Activated CD8-positive, alpha-beta T cell treated with anti-CD3 and anti-CD28 coated beads for 36 hours (primary cell): ENCODE measurements at regions of chr7 and their contacts with region 1.

Region 1: GRCh38 chr7:101287032-101287431 is 34.6 kb downstream of the IFT22 start:
- DNase-seq: no peak
- ATAC-seq: no peak
- H3K4me3 Mint-ChIP-seq: no peak overlapping the region
- H3K27ac Mint-ChIP-seq: no peak overlapping the region
- H3K4me1 Mint-ChIP-seq: peaks cover 25% of the 10 kb centered on the region
- H3K27me3 Mint-ChIP-seq: peaks cover 6% of the 10 kb centered on the region
- CTCF ChIP-seq: no peak

Region 2: GRCh38 chr7:101217388-101218235 is 69.4 kb before region 1 on chr7 and contains the starts of genes PLOD3 and ZNHIT1:
- CTCF ChIA-PET with region 1: interaction called, 22 read pairs
- POLR2A ChIA-PET with region 1: no interaction called
- intact Hi-C with region 1: no loop called
- DNase-seq: peak; percentile 99
- ATAC-seq: peak; percentile 89
- H3K4me3 Mint-ChIP-seq: peak within 1 kb of the TSS; percentile 98
- H3K27ac Mint-ChIP-seq: peak within 1 kb of the TSS; percentile 88
- H3K4me1 Mint-ChIP-seq: peaks cover 28% of the 10 kb centered on the region
- H3K27me3 Mint-ChIP-seq: no peaks in the 10 kb centered on the region
- CTCF ChIP-seq: peak; percentile 35
- total RNA-seq, gene PLOD3: 20.4 to 24.4 TPM
- total RNA-seq, gene ZNHIT1: 36.8 to 37.9 TPM

Region 3: DNA sequence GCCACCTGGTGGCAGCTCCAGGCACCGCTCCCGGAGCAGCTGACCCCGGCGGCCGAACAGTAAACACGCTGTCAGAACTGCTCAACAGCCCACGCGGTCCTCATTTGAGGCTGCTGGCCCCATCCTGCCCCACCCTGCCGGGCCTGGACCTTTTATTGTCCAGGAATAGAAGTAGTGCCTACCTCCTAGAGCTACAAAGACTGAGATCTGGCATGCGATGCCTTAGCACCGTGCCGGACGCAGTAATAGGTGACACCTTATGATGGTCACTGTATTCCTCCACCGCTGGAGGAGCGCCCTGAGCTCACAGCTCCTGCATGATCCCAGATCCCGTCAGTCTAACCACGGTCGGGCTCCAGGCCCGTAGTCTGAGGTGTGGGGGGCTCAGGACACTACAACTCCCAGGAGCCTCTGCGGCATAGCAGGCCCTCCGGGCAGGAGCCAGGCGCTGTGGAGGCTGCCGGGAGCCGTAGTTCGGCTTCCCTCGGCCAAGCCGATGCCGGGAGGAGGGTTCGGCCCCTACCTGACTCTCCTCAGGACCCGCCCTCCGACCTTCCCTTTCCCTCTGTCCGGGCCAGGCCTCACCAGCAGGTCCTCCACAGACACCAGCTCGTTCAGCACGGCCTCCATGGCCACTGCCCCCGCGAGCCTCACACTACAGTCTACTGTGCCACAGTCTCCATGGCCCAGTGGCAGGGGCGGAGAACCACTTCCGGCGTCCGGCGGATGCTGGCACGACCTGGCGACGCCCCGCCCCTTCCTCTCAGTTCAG is 42.5 kb before region 1 on chr7 and contains the start of gene FIS1:
- CTCF ChIA-PET with region 1: interaction called, 30 read pairs
- POLR2A ChIA-PET with region 1: no interaction called
- intact Hi-C with region 1: loop called (anchors 10 kb)
- DNase-seq: peak; percentile 97
- ATAC-seq: peak; percentile 95
- H3K4me3 Mint-ChIP-seq: peak within 1 kb of the TSS; percentile 85
- H3K27ac Mint-ChIP-seq: peak within 1 kb of the TSS; percentile 97
- H3K4me1 Mint-ChIP-seq: peaks cover 28% of the 10 kb centered on the region
- H3K27me3 Mint-ChIP-seq: no peaks in the 10 kb centered on the region
- CTCF ChIP-seq: peak; percentile 69
- total RNA-seq, gene FIS1: 86.5 to 96.8 TPM

Region 4: DNA sequence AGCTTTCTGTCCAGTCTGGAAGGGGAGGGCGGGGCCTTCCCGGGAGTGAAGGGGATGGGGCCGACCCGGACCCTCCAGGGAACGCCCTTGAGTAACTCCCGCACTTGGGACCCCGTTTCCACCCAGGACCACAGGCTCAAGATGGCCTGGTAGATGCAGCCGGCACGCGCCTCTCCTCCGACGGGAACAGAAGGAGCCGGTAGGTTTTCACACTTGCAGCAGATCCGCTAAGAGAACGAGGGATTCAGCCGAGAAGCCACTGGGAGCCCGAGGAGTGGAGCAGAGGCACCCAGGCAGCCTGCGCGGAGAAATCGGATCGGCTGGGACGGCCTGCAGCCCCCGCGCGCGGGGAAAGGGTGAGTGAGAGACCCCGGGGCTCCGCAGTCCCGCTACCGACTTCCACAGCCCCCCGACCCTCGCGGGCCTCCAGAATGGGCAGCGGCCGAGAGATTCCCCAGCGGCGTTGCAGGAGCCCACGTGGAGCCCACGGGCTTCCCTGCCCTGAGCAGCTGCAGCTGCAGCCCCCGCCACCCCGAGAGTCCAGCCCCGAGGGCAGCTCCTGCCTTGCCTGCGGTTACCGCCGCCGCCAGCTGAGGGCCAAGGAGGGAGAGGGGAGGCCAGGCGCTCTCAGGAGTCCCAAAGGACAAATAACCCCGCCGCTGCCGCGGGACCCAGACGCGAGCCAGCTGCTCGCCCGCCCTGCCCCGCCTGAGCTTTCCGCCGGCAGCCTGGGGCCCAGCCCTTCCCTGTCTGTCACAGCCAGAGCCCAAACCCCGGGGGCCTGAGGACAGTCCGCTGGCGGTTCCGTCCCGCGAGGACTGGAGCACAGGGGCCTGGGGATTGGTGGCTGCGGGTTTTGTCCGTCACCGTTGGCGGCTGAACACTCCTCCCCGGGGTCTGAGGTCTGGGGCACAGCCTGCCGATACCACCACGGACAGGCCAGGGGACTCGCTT is 12.8 kb after region 1 on chr7:
- CTCF ChIA-PET with region 1: interaction called, 18 read pairs
- POLR2A ChIA-PET with region 1: interaction called, 3 read pairs
- intact Hi-C with region 1: no loop called
- DNase-seq: no peak
- ATAC-seq: no peak
- H3K4me3 Mint-ChIP-seq: no peak overlapping the region
- H3K27ac Mint-ChIP-seq: no peak overlapping the region
- H3K4me1 Mint-ChIP-seq: peaks cover 3% of the 10 kb centered on the region
- H3K27me3 Mint-ChIP-seq: peaks cover 48% of the 10 kb centered on the region
- CTCF ChIP-seq: no peak

Region 5: GRCh38 chr7:101315336-101315735 is 28.3 kb after region 1 on chr7:
- CTCF ChIA-PET with region 1: interaction called, 18 read pairs
- POLR2A ChIA-PET with region 1: no interaction called
- intact Hi-C with region 1: no loop called
- DNase-seq: peak; percentile 74
- ATAC-seq: peak; percentile 47
- H3K4me3 Mint-ChIP-seq: no peak overlapping the region
- H3K27ac Mint-ChIP-seq: no peak overlapping the region
- H3K4me1 Mint-ChIP-seq: no peaks in the 10 kb centered on the region
- H3K27me3 Mint-ChIP-seq: no peaks in the 10 kb centered on the region
- CTCF ChIP-seq: peak; percentile 83